Activated CD8-positive, alpha-beta T cell treated with anti-CD3 and anti-CD28 coated beads, Interleukin-2, amount 10 ng/mL, durations not matched to agents 7 days and 5 days (primary cell): ENCODE measurements at regions of chr1 and their contacts with region 1.

Region 1: GRCh38 chr1:46603858-46604549 is at the start of gene MKNK1:
- DNase-seq: peak; percentile 98
- ATAC-seq: peak; percentile 94
- H3K4me3 Mint-ChIP-seq: peak within 1 kb of the TSS; percentile 92
- H3K27ac Mint-ChIP-seq: peak within 1 kb of the TSS; percentile 83
- H3K4me1 Mint-ChIP-seq: peaks cover 74% of the 10 kb centered on the region
- H3K27me3 Mint-ChIP-seq: no peaks in the 10 kb centered on the region
- total RNA-seq, gene MKNK1: 68.9 to 72.3 TPM

Region 2: GRCh38 chr1:46581681-46582455 is 22.1 kb before region 1 on chr1:
- CTCF ChIA-PET with region 1: interaction called, 40 read pairs
- POLR2A ChIA-PET with region 1: interaction called, 32 read pairs
- DNase-seq: peak; percentile 68
- ATAC-seq: peak; percentile 95
- H3K4me3 Mint-ChIP-seq: peak overlapping the region; percentile 69
- H3K27ac Mint-ChIP-seq: peak overlapping the region; percentile 98
- H3K4me1 Mint-ChIP-seq: peaks cover 64% of the 10 kb centered on the region
- H3K27me3 Mint-ChIP-seq: no peaks in the 10 kb centered on the region

Region 3: GRCh38 chr1:46616277-46617107 is 12.5 kb after region 1 on chr1 and contains the start of gene MOB3C:
- CTCF ChIA-PET with region 1: interaction called, 19 read pairs
- POLR2A ChIA-PET with region 1: interaction called, 79 read pairs
- DNase-seq: peak; percentile 72
- ATAC-seq: peak; percentile 77
- H3K4me3 Mint-ChIP-seq: peak within 1 kb of the TSS; percentile 92
- H3K27ac Mint-ChIP-seq: peak within 1 kb of the TSS; percentile 86
- H3K4me1 Mint-ChIP-seq: peaks cover 68% of the 10 kb centered on the region
- H3K27me3 Mint-ChIP-seq: no peaks in the 10 kb centered on the region
- total RNA-seq, gene MOB3C: 20.1 to 20.9 TPM

Region 4: GRCh38 chr1:46724991-46725735 is 121.2 kb after region 1 on chr1:
- CTCF ChIA-PET with region 1: interaction called, 19 read pairs
- POLR2A ChIA-PET with region 1: no interaction called
- DNase-seq: peak; percentile 84
- ATAC-seq: peak; percentile 98
- H3K4me3 Mint-ChIP-seq: no peak overlapping the region
- H3K27ac Mint-ChIP-seq: no peak overlapping the region
- H3K4me1 Mint-ChIP-seq: peaks cover 5% of the 10 kb centered on the region
- H3K27me3 Mint-ChIP-seq: peaks cover 23% of the 10 kb centered on the region